ENCODE measurements at regions of chr11 and their contacts with region 1.

Region 1: GRCh38 chr11:10499452-10499851 is 41.5 kb downstream of the RNF141 start:
- DNase-seq: peak; percentile 78

Region 2: GRCh38 chr11:10436224-10436623 is 63.2 kb before region 1 on chr11:
- intact Hi-C with region 1: loop called in 1 of 2 experiments (anchors 2 kb)
- DNase-seq: no peak

Region 3: GRCh38 chr11:10459029-10459970 is 40.2 kb before region 1 on chr11:
- intact Hi-C with region 1: no loop called
- DNase-seq: no peak

Region 4: DNA sequence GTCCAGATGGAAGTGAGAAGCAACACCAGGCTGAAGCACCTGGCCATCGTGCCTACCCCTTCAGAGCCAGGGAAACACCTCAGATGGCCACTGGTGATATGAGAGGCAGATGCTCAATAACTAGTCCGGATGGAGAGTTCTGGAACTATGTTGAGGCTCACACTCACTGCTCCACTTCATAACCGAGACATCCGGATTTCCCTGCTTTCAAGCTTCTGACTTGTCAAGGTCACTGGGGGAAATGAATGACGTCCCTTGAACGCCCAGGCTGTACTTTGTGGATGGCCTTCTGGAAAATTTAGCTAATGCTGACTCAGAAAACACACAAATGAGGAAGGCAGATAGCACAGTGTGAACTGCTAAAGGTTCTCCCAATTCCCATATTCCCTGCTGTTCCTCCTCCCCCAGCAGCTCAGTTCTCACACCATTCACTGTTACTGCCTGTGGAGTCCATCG is 69.1 kb after region 1 on chr11 and contains the start of gene LYVE1:
- intact Hi-C with region 1: no loop called
- DNase-seq: no peak
- total RNA-seq, gene LYVE1: 112 to 292 TPM

Region 5: DNA sequence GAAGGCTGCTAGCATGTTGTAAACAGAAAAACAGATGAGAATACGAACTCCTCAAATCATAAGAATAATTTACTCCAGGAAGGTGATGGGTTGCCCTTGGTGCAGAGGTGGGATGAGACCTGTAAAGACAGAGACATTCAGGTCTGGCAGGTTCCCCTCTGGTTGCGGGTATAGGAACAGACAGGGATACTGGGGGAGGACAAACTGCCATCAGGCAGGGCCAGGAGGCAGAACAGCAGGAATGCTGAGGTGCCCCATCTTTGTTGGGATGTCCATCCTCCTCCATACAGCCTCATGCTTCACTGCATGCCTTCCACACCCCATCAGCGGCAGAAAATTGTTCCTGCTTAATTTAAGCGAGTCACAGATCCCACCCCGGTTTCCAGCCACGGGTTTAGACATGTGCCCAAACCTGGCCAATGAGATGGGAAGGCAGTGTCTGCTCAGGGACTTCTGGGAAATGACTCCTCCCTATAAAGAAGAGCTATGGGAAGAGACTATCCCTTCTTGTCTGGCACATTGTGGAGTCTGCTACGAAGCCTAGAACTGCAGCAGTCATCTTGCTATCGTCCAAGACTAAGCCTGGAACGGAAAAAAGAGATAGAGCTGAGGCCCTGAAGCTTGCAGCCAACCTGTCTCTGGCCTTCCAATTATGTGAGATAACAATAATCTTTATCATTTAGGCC is 217.3 kb after region 1 on chr11:
- intact Hi-C with region 1: loop called in 1 of 2 experiments (anchors 1 kb)
- DNase-seq: no peak

Region 6: GRCh38 chr11:10762185-10762584 is 262.7 kb after region 1 on chr11:
- intact Hi-C with region 1: no loop called
- DNase-seq: no peak